Activated T-helper 2 cell treated with anti-CD3 and anti-CD28 coated beads, Interferon-gamma antibody, Interleukin-2, Interleukin-4, amounts not matched to agents 10 μg/mL and 5 μg/mL and 100 μg/mL, durations not matched to agents 14 hours and 24 hours and 36 hours (primary cell): ENCODE measurements at regions of chr1 and their contacts with region 1.

Region 1: GRCh38 chr1:234842726-234843641 is 233.0 kb upstream of the IRF2BP2 start:
- DNase-seq: peak; percentile 57
- H3K4me3 Mint-ChIP-seq: peak overlapping the region; percentile 77
- H3K27ac Mint-ChIP-seq: peak overlapping the region; percentile 90
- H3K4me1 Mint-ChIP-seq: peaks cover 93% of the 10 kb centered on the region
- H3K27me3 Mint-ChIP-seq: no peaks in the 10 kb centered on the region

Region 2: GRCh38 chr1:234722904-234723720 is 119.9 kb before region 1 on chr1:
- intact Hi-C with region 1: loop called (anchors 1 kb)
- DNase-seq: peak; percentile 26
- H3K4me3 Mint-ChIP-seq: peak overlapping the region; percentile 72
- H3K27ac Mint-ChIP-seq: peak overlapping the region; percentile 99
- H3K4me1 Mint-ChIP-seq: peaks cover 73% of the 10 kb centered on the region
- H3K27me3 Mint-ChIP-seq: no peaks in the 10 kb centered on the region

Region 3: DNA sequence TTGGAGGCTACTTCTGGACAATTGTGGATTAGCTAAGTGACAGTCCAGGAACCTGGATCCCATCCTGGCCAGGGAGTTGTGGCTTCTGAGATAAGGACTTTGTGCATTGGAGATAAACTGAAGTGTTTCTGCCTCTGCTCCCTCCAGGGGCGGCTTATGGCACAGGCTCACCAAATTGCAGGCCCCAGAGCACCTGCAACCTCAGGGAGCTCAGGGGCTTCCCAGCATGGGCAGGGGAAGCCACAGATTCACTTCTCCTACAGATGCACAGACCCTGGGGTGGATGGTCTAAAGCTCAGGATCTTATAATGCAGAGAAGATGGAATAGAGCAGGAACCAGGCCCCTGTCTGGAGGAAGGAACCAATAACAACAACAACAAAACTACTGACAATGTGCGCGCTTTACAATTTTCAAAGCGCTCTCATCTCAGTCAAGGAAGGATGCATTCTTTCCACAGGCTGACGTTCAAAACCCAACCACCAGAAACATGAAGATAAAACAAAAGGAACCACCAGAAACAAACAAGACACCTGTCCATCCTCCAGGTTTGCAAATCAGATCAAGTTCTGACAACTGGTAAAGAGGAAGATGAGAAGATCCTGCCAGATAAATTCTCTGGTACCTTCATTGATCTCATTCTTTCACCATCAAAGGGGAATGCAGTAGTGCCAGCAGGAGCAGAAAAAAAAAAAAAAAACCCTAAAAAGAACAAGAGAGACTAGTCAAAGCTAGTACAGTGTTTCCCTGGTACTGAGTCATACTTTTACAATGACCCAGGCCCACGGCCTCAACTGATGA is 112.0 kb before region 1 on chr1:
- intact Hi-C with region 1: loop called (anchors 1 kb)
- DNase-seq: peak; percentile 36
- H3K4me3 Mint-ChIP-seq: no peak overlapping the region
- H3K27ac Mint-ChIP-seq: peak overlapping the region; percentile 97
- H3K4me1 Mint-ChIP-seq: peaks cover 74% of the 10 kb centered on the region
- H3K27me3 Mint-ChIP-seq: no peaks in the 10 kb centered on the region

Region 4: GRCh38 chr1:234772345-234773147 is 70.4 kb before region 1 on chr1:
- intact Hi-C with region 1: loop called (anchors 1 kb)
- DNase-seq: peak; percentile 86
- H3K4me3 Mint-ChIP-seq: peak overlapping the region; percentile 71
- H3K27ac Mint-ChIP-seq: peak overlapping the region; percentile 97
- H3K4me1 Mint-ChIP-seq: peaks cover 58% of the 10 kb centered on the region
- H3K27me3 Mint-ChIP-seq: no peaks in the 10 kb centered on the region

Region 5: GRCh38 chr1:234862944-234863515 is 20.0 kb after region 1 on chr1:
- intact Hi-C with region 1: loop called (anchors 1 kb)
- DNase-seq: no peak
- H3K4me3 Mint-ChIP-seq: no peak overlapping the region
- H3K27ac Mint-ChIP-seq: no peak overlapping the region
- H3K4me1 Mint-ChIP-seq: peaks cover 30% of the 10 kb centered on the region
- H3K27me3 Mint-ChIP-seq: no peaks in the 10 kb centered on the region

Region 6: GRCh38 chr1:234875953-234876855 is 33.2 kb after region 1 on chr1:
- intact Hi-C with region 1: loop called (anchors 1 kb)
- DNase-seq: no peak
- H3K4me3 Mint-ChIP-seq: no peak overlapping the region
- H3K27ac Mint-ChIP-seq: peak overlapping the region; percentile 88
- H3K4me1 Mint-ChIP-seq: peaks cover 63% of the 10 kb centered on the region
- H3K27me3 Mint-ChIP-seq: no peaks in the 10 kb centered on the region

Region 7: DNA sequence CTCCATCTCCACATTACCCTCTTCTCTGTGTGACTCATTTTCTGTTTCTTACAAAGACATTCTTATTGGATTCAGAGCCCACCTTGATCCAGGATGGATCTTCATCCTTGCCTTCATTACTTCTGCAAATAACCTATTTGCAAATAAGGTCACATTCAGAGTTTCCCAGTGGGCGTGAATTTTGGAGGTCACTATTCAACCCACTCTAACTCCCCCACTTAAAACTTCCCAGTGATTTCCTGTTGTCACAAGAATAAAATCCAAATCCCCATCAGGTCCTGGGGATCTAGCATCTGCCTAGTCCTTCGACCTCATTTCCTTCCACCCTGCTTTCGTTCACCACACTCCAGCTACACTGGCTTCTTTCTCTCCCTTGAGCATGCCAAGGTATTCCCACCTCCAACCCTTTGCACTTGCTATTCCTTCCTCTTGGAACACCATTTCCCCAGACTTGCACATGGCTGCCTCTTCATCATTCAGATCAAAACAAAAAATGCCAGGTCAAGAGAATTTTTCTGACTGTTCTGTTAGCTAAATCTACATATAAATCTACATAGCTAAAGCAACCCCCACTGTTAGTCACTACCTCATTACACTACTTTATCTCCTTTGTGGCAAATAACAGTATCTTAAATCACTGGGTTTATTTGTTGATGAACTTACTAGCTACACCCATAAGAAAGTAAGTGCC is 98.5 kb after region 1 on chr1:
- intact Hi-C with region 1: loop called (anchors 1 kb)
- DNase-seq: no peak
- H3K4me3 Mint-ChIP-seq: no peak overlapping the region
- H3K27ac Mint-ChIP-seq: no peak overlapping the region
- H3K4me1 Mint-ChIP-seq: peaks cover 40% of the 10 kb centered on the region
- H3K27me3 Mint-ChIP-seq: no peaks in the 10 kb centered on the region

Region 8: GRCh38 chr1:235714205-235714897 is 871.4 kb after region 1 on chr1:
- intact Hi-C with region 1: no loop called
- DNase-seq: no peak
- H3K4me3 Mint-ChIP-seq: no peak overlapping the region
- H3K27ac Mint-ChIP-seq: no peak overlapping the region
- H3K4me1 Mint-ChIP-seq: peaks cover under 1% of the 10 kb centered on the region
- H3K27me3 Mint-ChIP-seq: no peaks in the 10 kb centered on the region